ENCODE measurements at regions of chr11 and their contacts with region 1.

Region 1: DNA sequence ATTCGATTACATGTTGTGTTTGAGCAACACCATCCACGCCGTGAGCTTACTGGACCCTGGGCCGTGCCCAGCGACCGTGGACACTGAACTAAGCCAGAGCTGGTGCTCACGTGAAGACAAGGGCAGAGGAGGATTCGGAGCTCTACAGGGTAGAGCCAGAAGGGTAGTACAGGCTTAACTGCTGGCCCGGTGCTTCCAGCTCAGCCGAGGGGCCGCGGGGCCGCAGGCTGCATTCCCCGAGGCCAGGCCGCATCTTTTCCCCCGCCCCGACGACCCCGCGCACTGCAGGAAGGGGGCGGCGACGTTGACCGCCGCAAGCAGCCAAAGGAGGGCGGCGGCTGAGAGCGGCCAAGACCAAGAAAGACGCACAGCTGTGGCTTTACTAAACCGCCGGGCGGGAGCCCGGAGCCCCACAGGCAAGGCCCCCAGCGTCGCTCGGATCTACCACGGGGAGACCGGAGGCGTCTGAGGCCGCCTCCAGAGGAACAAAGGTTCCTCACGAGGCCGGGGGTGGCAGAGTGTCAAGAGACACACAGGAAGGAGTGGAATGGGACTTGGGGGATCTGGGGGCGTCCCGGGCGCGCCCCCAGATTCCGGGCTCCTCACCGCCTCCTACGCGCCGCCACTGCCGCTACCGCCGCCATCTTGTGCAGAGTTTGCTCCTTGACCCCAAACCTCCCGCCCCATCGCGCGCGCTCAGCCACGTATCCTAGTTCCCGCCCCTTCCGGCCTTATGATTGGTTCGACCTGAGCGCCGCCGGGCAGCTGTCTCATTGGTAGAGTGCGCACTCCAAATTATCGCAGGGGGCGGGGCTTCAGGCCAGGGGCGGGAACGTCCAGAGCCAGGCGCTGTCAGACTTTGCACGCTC is at the start of gene GANAB:
- DNase-seq: peak; percentile 99
- H3K4me3 Mint-ChIP-seq: peak within 1 kb of the TSS; percentile 95
- H3K27ac Mint-ChIP-seq: peak within 1 kb of the TSS; percentile 92
- H3K4me1 Mint-ChIP-seq: no peaks in the 10 kb centered on the region
- H3K27me3 Mint-ChIP-seq: no peaks in the 10 kb centered on the region
- CTCF ChIP-seq: no peak
- total RNA-seq, gene GANAB: 364 and 374 TPM in 2 replicates

Region 2: DNA sequence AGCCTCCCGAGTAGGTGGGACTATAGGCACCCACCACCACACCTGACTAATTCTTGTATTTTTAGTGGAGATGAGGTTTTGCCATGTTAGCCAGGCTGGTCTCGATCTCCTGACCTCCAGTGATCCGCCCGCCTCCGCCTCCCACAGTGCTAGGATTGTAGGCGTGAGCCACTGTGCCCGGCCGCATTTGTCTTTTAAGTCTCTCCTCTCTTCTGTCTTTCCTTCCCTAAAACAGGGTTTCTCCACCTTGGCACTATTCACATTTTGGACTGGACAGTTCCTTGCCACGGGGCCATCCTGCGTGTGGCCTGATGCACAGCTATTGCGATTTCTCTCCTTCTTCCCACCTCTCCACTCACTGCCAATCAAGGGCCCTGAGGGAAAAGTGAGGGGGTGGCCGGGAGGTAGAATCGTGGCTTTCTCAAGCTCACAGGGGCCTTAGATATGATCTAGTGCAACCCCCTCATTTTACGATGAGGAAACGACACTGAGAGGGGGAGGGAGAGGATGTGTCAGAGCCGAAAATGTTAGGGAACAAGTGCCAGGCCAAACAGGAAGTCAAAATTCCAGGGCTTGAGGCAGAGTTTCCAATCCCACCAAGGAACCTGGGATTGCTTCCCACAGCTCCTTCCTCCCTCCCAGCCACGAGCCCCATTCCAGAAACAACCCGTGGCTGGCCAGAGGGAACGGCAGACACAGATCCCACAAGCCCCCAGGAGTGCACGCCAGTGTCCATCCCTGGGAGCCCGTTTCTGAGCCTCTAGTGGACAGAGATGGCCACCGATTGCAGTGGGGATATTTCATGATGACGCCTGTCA is 206.2 kb before region 1 on chr11:
- CTCF ChIA-PET with region 1: no interaction called
- POLR2A ChIA-PET with region 1: no interaction called
- intact Hi-C with region 1: no loop called
- DNase-seq: peak; percentile 34
- H3K4me3 Mint-ChIP-seq: no peak overlapping the region
- H3K27ac Mint-ChIP-seq: no peak overlapping the region
- H3K4me1 Mint-ChIP-seq: no peaks in the 10 kb centered on the region
- H3K27me3 Mint-ChIP-seq: no peaks in the 10 kb centered on the region
- CTCF ChIP-seq: no peak

Region 3: DNA sequence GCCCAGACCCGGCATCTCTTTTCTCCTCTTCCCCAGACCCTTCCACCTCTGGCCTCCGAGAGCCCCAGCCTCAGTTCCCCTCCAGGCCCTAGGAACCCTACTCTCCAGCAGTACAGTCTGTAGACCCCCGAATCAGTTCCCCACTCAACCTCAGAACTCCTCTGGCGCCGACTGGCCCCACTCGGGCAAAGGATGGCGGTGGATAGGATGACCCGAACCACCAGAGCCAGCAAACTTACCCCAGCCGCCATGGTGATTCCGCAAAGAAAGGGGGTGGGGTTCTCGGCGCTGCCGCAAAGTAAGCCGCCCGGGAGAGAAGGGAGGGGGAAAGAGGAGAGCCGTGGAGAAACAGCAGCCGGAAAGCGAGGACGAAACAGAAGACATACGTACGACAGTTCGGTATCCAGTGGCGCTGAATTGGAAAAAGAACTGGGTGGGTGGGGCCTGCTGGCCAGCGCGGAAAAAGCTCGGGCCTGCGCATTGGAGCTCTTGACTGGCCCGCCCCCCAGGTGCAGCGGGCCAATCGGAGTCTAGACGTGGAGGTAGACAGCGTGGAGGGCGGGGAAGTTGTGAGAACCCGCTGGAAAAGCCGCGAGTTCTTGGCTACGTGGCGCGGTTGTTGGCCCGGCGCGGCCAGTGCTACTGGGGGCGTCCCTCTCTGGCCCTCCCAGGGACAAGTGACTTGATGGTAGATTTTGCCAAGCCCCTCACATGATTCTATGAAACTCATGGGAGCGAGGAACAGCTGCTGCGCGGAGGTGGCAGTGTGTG is 72.4 kb before region 1 on chr11 and contains the start of gene EEF1G:
- CTCF ChIA-PET with region 1: no interaction called
- POLR2A ChIA-PET with region 1: interaction called, 14 read pairs
- intact Hi-C with region 1: no loop called
- DNase-seq: peak; percentile 100
- H3K4me3 Mint-ChIP-seq: peak within 1 kb of the TSS; percentile 100
- H3K27ac Mint-ChIP-seq: peak within 1 kb of the TSS; percentile 100
- H3K4me1 Mint-ChIP-seq: peaks cover 30% of the 10 kb centered on the region
- H3K27me3 Mint-ChIP-seq: no peaks in the 10 kb centered on the region
- CTCF ChIP-seq: no peak
- total RNA-seq, gene EEF1G: 1,510 and 1,855 TPM in 2 replicates